CD8-positive, alpha-beta memory T cell (primary cell): ENCODE measurements at regions of chr17 and their contacts with region 1.

Region 1: DNA sequence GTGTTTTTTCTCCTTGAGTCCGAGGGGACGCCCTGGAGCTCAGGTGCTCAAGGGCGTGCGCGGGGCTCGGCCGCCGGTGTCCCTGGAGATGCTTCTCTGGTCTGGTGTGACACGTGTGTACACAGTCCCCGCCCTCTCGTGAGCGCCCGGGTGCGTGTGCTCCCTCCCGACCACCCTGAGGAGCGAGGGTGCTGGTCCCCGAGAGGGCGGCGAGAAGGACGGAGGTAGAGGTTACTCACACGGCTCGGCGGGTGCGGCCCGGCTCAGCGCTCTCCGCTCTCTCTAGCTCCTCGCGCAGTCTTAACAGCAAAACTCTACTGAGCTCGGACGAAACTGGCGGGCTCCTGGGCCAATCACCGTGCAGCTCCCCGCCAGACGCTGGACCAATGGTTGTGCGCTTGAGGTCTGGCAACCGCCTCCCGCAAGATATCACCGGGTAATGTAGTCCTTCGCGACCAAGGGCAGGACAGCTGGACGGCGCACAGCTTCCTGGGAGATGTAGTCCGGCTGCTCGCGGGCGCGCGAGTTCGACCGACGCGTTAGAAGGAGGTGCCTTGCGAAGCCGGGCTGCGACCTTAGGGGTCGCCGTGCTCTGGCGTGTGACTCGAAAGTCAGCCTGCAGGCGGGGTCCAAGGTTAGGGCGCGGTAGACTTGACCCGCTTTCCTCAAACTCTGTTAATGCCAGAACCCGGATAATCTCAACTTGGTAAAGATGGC is at the start of gene SLC25A19:
- DNase-seq: peak; percentile 96 to 98 (median 97)
- H3K4me3 ChIP-seq: peak within 1 kb of the TSS; percentile 95
- H3K4me3 Mint-ChIP-seq: peak within 1 kb of the TSS; percentile 95 to 100 (median 98)
- H3K27ac ChIP-seq: peak within 1 kb of the TSS; percentile 96
- H3K27ac Mint-ChIP-seq: peak within 1 kb of the TSS; percentile 95 to 100 (median 100)
- H3K4me1 ChIP-seq: peaks cover 10% of the 10 kb centered on the region
- H3K4me1 Mint-ChIP-seq: peaks cover 10 to 23% (median 18%) of the 10 kb centered on the region in 3 donors
- H3K27me3 ChIP-seq: no peaks in the 10 kb centered on the region
- H3K27me3 Mint-ChIP-seq: peaks cover 0 to 3% of the 10 kb centered on the region in 2 donors
- total RNA-seq, gene SLC25A19: 119 to 126 TPM

Region 2: GRCh38 chr17:75261336-75262111 is 27.7 kb before region 1 on chr17 and contains the starts of genes GGA3 and MRPS7:
- CTCF ChIA-PET with region 1: interaction called, 14 read pairs
- POLR2A ChIA-PET with region 1: interaction called, 37 read pairs
- DNase-seq: peak; percentile 93 to 97 (median 97)
- H3K4me3 ChIP-seq: peak within 1 kb of the TSS; percentile 94
- H3K4me3 Mint-ChIP-seq: peak within 1 kb of the TSS; percentile 92 to 98 (median 95)
- H3K27ac ChIP-seq: peak within 1 kb of the TSS; percentile 99
- H3K27ac Mint-ChIP-seq: peak within 1 kb of the TSS; percentile 99 to 100 (median 100)
- H3K4me1 ChIP-seq: peaks cover 29% of the 10 kb centered on the region
- H3K4me1 Mint-ChIP-seq: peaks cover 48 to 68% (median 52%) of the 10 kb centered on the region in 3 donors
- H3K27me3 ChIP-seq: no peaks in the 10 kb centered on the region
- H3K27me3 Mint-ChIP-seq: peaks cover 0 to 3% of the 10 kb centered on the region in 2 donors
- total RNA-seq, gene GGA3: 73.2 to 75.1 TPM
- total RNA-seq, gene MRPS7: 101 to 102 TPM

Region 3: GRCh38 chr17:75271233-75271954 is 17.9 kb before region 1 on chr17:
- CTCF ChIA-PET with region 1: interaction called, 66 read pairs
- POLR2A ChIA-PET with region 1: interaction called, 72 read pairs
- DNase-seq: peak; percentile 83 to 92 (median 90)
- H3K4me3 ChIP-seq: peak overlapping the region; percentile 72
- H3K4me3 Mint-ChIP-seq: peak overlapping the region; percentile 77 to 92 (median 83)
- H3K27ac ChIP-seq: peak overlapping the region; percentile 89
- H3K27ac Mint-ChIP-seq: peak overlapping the region; percentile 72 to 94 (median 90)
- H3K4me1 ChIP-seq: peaks cover 19% of the 10 kb centered on the region
- H3K4me1 Mint-ChIP-seq: peaks cover 20 to 35% (median 23%) of the 10 kb centered on the region in 3 donors
- H3K27me3 ChIP-seq: no peaks in the 10 kb centered on the region
- H3K27me3 Mint-ChIP-seq: peaks cover 0 to 1% of the 10 kb centered on the region in 2 donors

Region 4: DNA sequence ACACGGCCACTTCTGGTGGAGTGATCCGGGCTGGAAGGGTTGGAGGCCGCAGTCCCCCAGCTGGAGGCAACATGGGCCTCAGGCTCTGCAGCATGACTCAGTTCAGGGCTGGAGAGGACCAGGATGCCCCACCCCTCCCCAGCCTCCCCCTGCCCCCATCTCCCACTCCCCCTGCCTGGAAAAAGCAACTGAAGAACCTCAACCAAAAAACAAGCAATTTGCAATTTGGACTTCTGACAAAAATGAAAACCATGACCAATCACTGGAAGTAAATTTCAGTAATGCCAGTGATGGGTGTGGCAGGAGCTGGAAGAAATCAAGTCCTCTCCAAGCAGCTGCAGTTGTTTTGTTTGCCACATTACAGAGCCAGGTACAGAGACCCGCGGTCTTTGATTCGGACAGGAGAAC is 11.6 kb before region 1 on chr17:
- CTCF ChIA-PET with region 1: interaction called, 66 read pairs
- POLR2A ChIA-PET with region 1: interaction called, 72 read pairs
- DNase-seq: no peak
- H3K4me3 ChIP-seq: no peak overlapping the region
- H3K4me3 Mint-ChIP-seq: no peak overlapping the region
- H3K27ac ChIP-seq: no peak overlapping the region
- H3K27ac Mint-ChIP-seq: no peak overlapping the region
- H3K4me1 ChIP-seq: peaks cover under 1% of the 10 kb centered on the region
- H3K4me1 Mint-ChIP-seq: peaks cover 6 to 11% (median 9%) of the 10 kb centered on the region in 3 donors
- H3K27me3 ChIP-seq: no peaks in the 10 kb centered on the region
- H3K27me3 Mint-ChIP-seq: no peaks in the 10 kb centered on the region

Region 5: DNA sequence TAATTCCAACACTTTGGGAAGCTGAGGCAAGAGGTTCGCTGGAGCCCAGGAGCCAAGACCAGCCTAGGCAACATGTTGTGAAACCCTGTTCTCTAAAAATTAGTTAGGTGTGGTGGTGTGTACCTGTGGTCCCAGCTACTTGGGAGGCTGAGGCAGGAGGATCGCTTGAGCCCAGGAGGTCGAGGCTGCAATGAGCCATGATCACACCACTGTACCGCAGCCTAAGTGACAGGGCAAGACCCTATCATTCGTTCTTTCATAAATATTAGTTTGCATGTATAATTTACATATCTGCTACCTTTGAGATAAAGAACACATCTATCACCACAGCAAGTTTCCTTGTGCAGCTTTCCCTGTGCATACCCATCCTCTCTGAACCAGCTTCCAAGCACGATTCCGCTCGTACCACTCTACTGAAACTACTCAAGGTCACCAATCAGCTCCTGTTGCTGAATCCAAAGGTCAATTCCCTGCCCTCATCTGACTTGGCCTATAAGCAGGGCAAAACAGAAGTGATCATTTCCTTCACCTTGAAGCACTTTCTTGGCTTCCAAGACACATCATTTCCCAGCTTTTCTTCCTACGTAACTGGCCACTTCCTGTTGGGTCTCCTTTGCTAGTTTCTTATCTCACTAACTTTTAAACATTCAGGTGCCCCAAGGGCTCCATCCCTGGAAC is 67.1 kb after region 1 on chr17:
- CTCF ChIA-PET with region 1: no interaction called
- POLR2A ChIA-PET with region 1: no interaction called
- DNase-seq: no peak
- H3K4me3 ChIP-seq: no peak overlapping the region
- H3K4me3 Mint-ChIP-seq: no peak overlapping the region
- H3K27ac ChIP-seq: no peak overlapping the region
- H3K27ac Mint-ChIP-seq: peak overlapping the region in 6 of 8 donors; percentile 7 to 84 (median 52)
- H3K4me1 ChIP-seq: peaks cover 26% of the 10 kb centered on the region
- H3K4me1 Mint-ChIP-seq: peaks cover 55 to 74% (median 73%) of the 10 kb centered on the region in 3 donors
- H3K27me3 ChIP-seq: no peaks in the 10 kb centered on the region
- H3K27me3 Mint-ChIP-seq: no peaks in the 10 kb centered on the region

Region 6: GRCh38 chr17:75405365-75406221 is 116.3 kb after region 1 on chr17 and contains the start of gene GRB2:
- CTCF ChIA-PET with region 1: interaction called, 14 read pairs
- POLR2A ChIA-PET with region 1: interaction called, 17 read pairs
- DNase-seq: peak; percentile 99 to 100 (median 100)
- H3K4me3 ChIP-seq: peak within 1 kb of the TSS; percentile 68
- H3K4me3 Mint-ChIP-seq: peak within 1 kb of the TSS; percentile 93 to 98 (median 97)
- H3K27ac ChIP-seq: peak within 1 kb of the TSS; percentile 90
- H3K27ac Mint-ChIP-seq: peak within 1 kb of the TSS; percentile 86 to 99 (median 95)
- H3K4me1 ChIP-seq: peaks cover 40% of the 10 kb centered on the region
- H3K4me1 Mint-ChIP-seq: peaks cover 37 to 47% (median 45%) of the 10 kb centered on the region in 3 donors
- H3K27me3 ChIP-seq: no peaks in the 10 kb centered on the region
- H3K27me3 Mint-ChIP-seq: peaks cover 0 to 4% of the 10 kb centered on the region in 2 donors
- total RNA-seq, gene GRB2: 180 to 189 TPM